OCI-LY7 (cell line): ENCODE measurements at regions of chr10 and their contacts with region 1.

Region 1: GRCh38 chr10:60237977-60238758 is 151.5 kb downstream of the ANK3 start:
- DNase-seq: peak; percentile 85
- H3K4me3 ChIP-seq: peak overlapping the region; percentile 63
- H3K27ac ChIP-seq: peak overlapping the region; percentile 99
- H3K4me1 ChIP-seq: peaks cover 61% of the 10 kb centered on the region
- CTCF ChIP-seq: peak; percentile 88

Region 2: DNA sequence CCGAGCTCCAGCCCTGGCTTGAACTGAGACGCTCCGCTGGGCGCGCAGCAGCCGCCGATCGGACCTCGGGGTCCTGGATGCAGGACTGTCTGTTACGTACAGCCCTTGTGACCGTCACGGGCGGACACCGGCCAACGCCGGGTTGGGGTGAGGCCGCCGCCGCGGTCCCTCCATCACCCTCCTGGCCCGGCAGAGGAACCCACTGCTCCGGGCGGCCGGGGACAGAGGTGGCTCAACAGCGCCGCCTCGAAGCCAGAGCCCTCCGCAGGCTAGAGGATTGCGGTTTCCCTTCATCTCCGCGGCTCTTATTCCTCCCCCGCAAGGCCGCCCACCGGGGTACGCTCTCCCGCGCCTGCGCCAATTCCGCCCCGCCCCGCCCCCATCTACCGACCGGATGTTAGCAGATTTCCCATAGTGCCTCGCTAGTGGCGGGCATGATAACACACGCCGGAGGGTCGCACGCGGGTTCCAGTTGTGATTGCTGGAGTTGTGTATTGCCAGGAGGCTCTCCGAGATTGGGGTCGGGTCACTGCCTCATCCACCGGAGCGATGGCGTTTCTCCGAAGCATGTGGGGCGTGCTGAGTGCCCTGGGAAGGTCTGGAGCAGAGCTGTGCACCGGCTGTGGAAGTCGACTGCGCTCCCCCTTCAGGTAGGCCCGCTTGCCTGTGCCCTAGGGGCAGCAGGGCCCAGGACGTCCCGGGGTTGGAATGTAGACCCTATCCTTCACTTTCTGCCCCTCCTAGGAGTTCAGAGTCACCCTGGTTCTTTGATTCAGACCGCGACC is 1853.0 kb before region 1 on chr10 and contains the start of gene TFAM:
- CTCF ChIA-PET with region 1: no interaction called
- POLR2A ChIA-PET with region 1: no interaction called
- intact Hi-C with region 1: loop called (anchors 10 kb)
- DNase-seq: peak; percentile 91
- H3K4me3 ChIP-seq: peak within 1 kb of the TSS; percentile 94
- H3K27ac ChIP-seq: peak within 1 kb of the TSS; percentile 68
- H3K4me1 ChIP-seq: peaks cover 22% of the 10 kb centered on the region
- CTCF ChIP-seq: peak; percentile 53; the same call in 1 of the 2 replicates
- total RNA-seq, gene TFAM: 62.7 and 71.1 TPM in 2 replicates

Region 3: GRCh38 chr10:59906417-59907202 is 331.6 kb before region 1 on chr10 and contains the start of gene CCDC6:
- CTCF ChIA-PET with region 1: interaction called, 4 read pairs
- POLR2A ChIA-PET with region 1: no interaction called
- intact Hi-C with region 1: loop called (anchors 2 kb)
- DNase-seq: peak; percentile 92
- H3K4me3 ChIP-seq: peak within 1 kb of the TSS; percentile 100
- H3K27ac ChIP-seq: peak within 1 kb of the TSS; percentile 77
- H3K4me1 ChIP-seq: peaks cover 39% of the 10 kb centered on the region
- CTCF ChIP-seq: peak; percentile 69
- total RNA-seq, gene CCDC6: 9.5 and 10.9 TPM in 2 replicates

Region 4: DNA sequence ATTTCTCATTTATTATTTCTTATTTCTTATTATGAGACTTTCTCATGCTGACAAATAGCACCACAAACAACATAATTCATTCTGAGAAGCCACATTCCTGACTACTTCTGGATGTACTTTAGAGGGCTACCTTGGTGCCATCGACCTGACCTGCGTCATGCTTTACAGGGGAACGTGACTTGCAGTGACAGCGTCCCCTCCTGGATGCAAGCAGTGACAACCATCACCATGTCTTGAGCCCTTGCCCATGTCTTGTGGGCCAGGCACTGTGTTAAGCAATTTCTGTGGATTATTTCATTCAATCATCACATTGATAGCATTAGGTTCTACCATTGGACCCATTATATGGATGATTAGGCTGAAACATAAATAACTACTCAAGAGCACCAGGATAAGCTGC is 14.5 kb after region 1 on chr10:
- CTCF ChIA-PET with region 1: interaction called, 5 read pairs
- POLR2A ChIA-PET with region 1: interaction called, 11 read pairs
- intact Hi-C with region 1: no loop called
- DNase-seq: no peak
- H3K4me3 ChIP-seq: no peak overlapping the region
- H3K27ac ChIP-seq: no peak overlapping the region
- H3K4me1 ChIP-seq: no peaks in the 10 kb centered on the region
- CTCF ChIP-seq: no peak

Region 5: GRCh38 chr10:60367431-60367830 is 129.3 kb after region 1 on chr10:
- CTCF ChIA-PET with region 1: no interaction called
- POLR2A ChIA-PET with region 1: no interaction called
- intact Hi-C with region 1: no loop called
- DNase-seq: no peak
- H3K4me3 ChIP-seq: no peak overlapping the region
- H3K27ac ChIP-seq: no peak overlapping the region
- H3K4me1 ChIP-seq: no peaks in the 10 kb centered on the region
- CTCF ChIP-seq: no peak

Region 6: GRCh38 chr10:60434418-60435046 is 196.4 kb after region 1 on chr10:
- CTCF ChIA-PET with region 1: interaction called, 6 read pairs
- POLR2A ChIA-PET with region 1: interaction called, 11 read pairs
- intact Hi-C with region 1: loop called (anchors 1 kb)
- DNase-seq: peak; percentile 49
- H3K4me3 ChIP-seq: no peak overlapping the region
- H3K27ac ChIP-seq: no peak overlapping the region
- H3K4me1 ChIP-seq: no peaks in the 10 kb centered on the region
- CTCF ChIP-seq: peak; percentile 90

Region 7: DNA sequence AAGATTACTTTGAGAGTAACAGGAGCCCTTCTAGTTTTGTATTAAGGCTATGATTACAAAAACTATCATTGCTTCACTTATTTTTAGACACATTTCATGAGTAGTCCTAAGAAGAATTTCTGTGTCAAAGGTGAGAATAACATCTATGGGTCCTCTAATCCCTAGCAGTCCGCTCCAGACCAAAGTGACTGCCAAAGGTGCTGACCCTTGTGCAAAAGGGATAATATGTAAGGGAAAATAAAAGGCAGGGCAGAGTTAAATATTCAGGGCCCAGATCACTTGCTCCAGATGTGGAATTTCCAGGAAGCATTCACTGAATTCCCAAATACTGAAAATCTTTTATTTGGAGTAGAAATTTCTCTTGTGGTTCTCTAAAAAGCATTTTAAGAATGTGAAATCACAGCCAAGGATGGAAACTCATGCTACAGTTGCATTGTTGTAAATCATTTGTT is 676.5 kb after region 1 on chr10:
- CTCF ChIA-PET with region 1: no interaction called
- POLR2A ChIA-PET with region 1: no interaction called
- intact Hi-C with region 1: loop called (anchors 10 kb)
- DNase-seq: no peak
- H3K4me3 ChIP-seq: no peak overlapping the region
- H3K27ac ChIP-seq: no peak overlapping the region
- H3K4me1 ChIP-seq: peaks cover 8% of the 10 kb centered on the region
- CTCF ChIP-seq: no peak